GM12878 (cell line): ENCODE measurements at regions of chr11 and their contacts with region 1.

Region 1: GRCh38 chr11:65013692-65014145 is 241 bp upstream of the ARL2 start:
- DNase-seq: peak; percentile 69
- ATAC-seq: peak; percentile 89
- H3K4me3 ChIP-seq: peak overlapping the region; percentile 76
- H3K27ac ChIP-seq: peak overlapping the region; percentile 88
- H3K4me1 ChIP-seq: peaks cover 17% of the 10 kb centered on the region
- H3K27me3 ChIP-seq: no peaks in the 10 kb centered on the region
- CTCF ChIP-seq: peak in 2 of 3 experiments; percentile 51 to 60; a peak in 4 of 6 replicates
- EP300 ChIP-seq: no peak; a peak in 1 of 4 replicates
- POLR2A ChIP-seq: peak; percentile 72
- RAD21 ChIP-seq: peak; percentile 38; the same call in 1 of the 2 replicates

Region 2: DNA sequence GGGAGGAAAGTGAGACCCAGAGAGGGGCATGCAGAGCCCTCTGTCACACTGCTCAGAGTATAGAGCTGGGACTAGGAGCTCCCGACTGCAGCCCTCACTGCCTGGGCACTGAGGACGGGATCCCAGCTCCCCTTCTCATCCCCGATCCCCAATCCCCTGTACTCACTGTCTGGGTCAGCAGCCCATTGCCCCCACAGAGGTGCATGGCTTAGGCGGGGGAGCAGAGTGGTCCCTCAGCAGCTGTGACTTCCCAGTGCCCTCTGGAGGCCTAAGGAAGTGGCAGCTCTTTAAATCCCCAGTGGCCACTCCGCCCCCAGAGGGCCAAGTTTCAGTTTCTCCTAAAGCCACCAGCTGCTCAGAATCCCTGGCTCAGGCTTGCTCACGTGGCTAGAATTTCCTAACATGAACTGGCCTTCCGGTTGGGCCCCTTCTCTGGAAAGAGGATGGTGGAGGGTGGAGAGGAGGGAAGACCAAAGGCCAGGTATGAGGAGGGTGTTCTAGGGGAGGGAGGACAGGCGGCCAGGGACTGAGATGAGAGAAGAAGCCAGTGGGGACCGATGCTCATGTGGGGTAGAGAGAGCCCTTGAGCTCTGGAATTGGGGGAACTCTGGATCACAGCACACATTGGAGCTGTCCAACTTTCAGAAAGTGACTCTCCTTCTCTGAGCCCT is 16.9 kb before region 1 on chr11 and contains the start of gene BATF2:
- CTCF ChIA-PET with region 1: interaction called, 25 read pairs
- POLR2A ChIA-PET with region 1: interaction called, 4 read pairs
- RAD21 ChIA-PET with region 1: interaction called, 9 read pairs
- SMC1A ChIA-PET with region 1: interaction called, 7 read pairs
- in situ Hi-C with region 1: no loop called
- intact Hi-C with region 1: no loop called
- DNase-seq: no peak
- ATAC-seq: peak; percentile 87
- H3K4me3 ChIP-seq: peak within 1 kb of the TSS; percentile 28; the same call in 1 of the 2 replicates
- H3K27ac ChIP-seq: no peak within 1 kb of the TSS
- H3K4me1 ChIP-seq: peaks cover 8% of the 10 kb centered on the region
- H3K27me3 ChIP-seq: no peaks in the 10 kb centered on the region; a peak in 1 of 4 replicates
- CTCF ChIP-seq: peak; percentile 35 to 48 (median 41); a peak in 5 of 6 replicates
- EP300 ChIP-seq: no peak
- POLR2A ChIP-seq: no peak
- RAD21 ChIP-seq: peak; percentile 52
- polyA plus RNA-seq, gene BATF2: 0.18 to 0.24 TPM

Region 3: DNA sequence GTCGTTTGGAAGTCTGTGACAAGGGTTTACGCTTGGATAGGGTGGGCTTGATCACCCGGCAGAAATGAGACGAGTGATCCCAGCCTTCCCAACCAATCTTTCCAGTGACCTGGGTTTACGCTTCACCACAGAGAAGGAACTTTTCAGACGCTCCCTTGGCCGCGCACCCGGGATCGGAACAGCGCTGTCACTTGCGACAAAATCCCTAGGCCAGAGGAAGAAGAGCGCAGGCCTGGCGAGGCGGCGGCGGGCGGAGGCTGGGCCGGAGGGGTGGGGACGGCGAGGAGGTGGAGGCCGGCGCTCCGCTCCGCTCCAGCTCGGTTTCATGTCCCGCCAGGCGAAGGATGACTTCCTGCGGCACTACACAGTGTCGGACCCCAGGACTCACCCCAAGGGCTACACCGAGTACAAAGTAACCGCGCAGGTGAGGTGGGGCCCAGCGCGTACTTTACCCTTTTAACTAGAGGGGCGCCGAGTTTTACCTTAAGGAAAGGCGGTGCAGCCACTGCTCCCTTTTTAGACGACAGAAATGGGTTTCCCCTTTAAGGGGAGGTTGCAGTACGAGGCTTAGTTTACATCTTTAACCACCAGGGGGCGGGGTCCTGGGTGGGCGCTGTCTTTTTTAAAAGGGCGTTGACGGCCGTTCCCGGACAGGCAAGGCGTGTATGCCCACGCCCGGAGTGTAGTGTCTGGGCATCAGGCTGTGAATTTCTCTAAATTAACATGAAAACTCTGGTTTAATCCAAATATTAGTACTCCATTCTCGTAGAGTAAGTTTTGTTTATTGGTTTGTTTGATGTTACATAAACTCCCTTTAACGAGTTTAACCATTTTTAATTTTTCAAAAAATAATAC is 13.7 kb after region 1 on chr11 and contains the start of gene SNX15:
- CTCF ChIA-PET with region 1: interaction called, 39 read pairs
- POLR2A ChIA-PET with region 1: no interaction called
- RAD21 ChIA-PET with region 1: interaction called, 13 read pairs
- SMC1A ChIA-PET with region 1: interaction called, 3 read pairs
- in situ Hi-C with region 1: no loop called
- intact Hi-C with region 1: no loop called
- DNase-seq: peak; percentile 80
- ATAC-seq: peak; percentile 98
- H3K4me3 ChIP-seq: peak within 1 kb of the TSS; percentile 65
- H3K27ac ChIP-seq: peak within 1 kb of the TSS; percentile 74
- H3K4me1 ChIP-seq: peaks cover 8% of the 10 kb centered on the region; the same call in 1 of the 2 replicates
- H3K27me3 ChIP-seq: no peaks in the 10 kb centered on the region
- CTCF ChIP-seq: peak; percentile 29 to 45 (median 37); a peak in 4 of 6 replicates
- EP300 ChIP-seq: no peak
- POLR2A ChIP-seq: peak; percentile 78
- RAD21 ChIP-seq: peak; percentile 28; the same call in 1 of the 2 replicates
- polyA plus RNA-seq, gene SNX15: 2.4 to 3.3 TPM

Region 4: GRCh38 chr11:65083834-65084597 is 70.3 kb after region 1 on chr11 and contains the starts of genes CDCA5 and ZFPL1:
- CTCF ChIA-PET with region 1: interaction called, 9 read pairs
- POLR2A ChIA-PET with region 1: interaction called, 3 read pairs
- RAD21 ChIA-PET with region 1: interaction called, 6 read pairs
- SMC1A ChIA-PET with region 1: interaction called, 3 read pairs
- in situ Hi-C with region 1: no loop called
- intact Hi-C with region 1: loop called (anchors 2 kb)
- DNase-seq: peak; percentile 75
- ATAC-seq: peak; percentile 82
- H3K4me3 ChIP-seq: peak within 1 kb of the TSS; percentile 86
- H3K27ac ChIP-seq: peak within 1 kb of the TSS; percentile 84
- H3K4me1 ChIP-seq: peaks cover 24% of the 10 kb centered on the region
- H3K27me3 ChIP-seq: no peaks in the 10 kb centered on the region
- CTCF ChIP-seq: no peak
- EP300 ChIP-seq: peak in 1 of 2 experiments; percentile 22; a peak in 1 of 4 replicates
- POLR2A ChIP-seq: peak; percentile 97
- RAD21 ChIP-seq: no peak
- polyA plus RNA-seq, gene CDCA5: 21.2 to 34.3 TPM
- polyA plus RNA-seq, gene ZFPL1: 2.2 to 5.6 TPM

Region 5: DNA sequence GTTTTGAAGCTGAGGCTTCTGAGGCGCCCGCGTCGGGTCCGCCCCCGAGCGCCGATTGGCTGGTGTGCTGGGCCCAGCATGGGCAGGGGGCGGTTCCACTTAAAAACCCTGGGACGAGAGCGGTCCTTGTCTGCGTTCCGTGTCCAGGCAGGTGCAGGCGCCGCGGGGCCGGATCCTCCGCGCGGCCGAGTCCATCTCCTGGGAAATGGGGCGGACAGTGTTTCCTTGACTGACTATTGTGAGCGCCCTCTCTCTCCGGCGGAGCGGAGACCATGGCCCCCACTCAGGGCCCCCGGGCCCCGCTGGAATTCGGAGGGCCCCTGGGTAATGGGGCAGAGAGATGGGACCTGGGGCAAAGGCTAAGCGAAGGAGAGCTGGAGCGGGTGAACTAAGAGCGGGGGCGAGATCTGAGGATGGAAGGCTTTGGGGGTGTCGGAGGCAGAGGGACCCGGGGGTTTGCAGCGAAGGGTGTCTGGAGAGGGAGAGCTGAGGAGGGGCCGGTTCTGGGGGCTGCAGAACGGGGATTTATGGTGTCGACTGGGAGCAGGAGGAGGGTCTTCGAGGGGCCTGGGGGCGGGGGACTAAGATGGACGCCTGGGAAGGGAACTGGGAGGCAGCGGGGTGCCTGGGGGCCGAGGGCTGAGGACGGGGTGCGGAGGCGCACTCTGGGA is 98.2 kb after region 1 on chr11 and contains the start of gene TM7SF2:
- CTCF ChIA-PET with region 1: interaction called, 64 read pairs
- POLR2A ChIA-PET with region 1: interaction called, 4 read pairs
- RAD21 ChIA-PET with region 1: interaction called, 14 read pairs
- SMC1A ChIA-PET with region 1: interaction called, 10 read pairs
- in situ Hi-C with region 1: no loop called
- intact Hi-C with region 1: loop called (anchors 1 kb)
- DNase-seq: no peak
- ATAC-seq: peak; percentile 89
- H3K4me3 ChIP-seq: peak within 1 kb of the TSS; percentile 85
- H3K27ac ChIP-seq: peak within 1 kb of the TSS; percentile 14
- H3K4me1 ChIP-seq: peaks cover 24% of the 10 kb centered on the region
- H3K27me3 ChIP-seq: no peaks in the 10 kb centered on the region
- CTCF ChIP-seq: no peak
- EP300 ChIP-seq: no peak
- POLR2A ChIP-seq: peak; percentile 97
- RAD21 ChIP-seq: no peak
- polyA plus RNA-seq, gene TM7SF2: 0.52 to 2.9 TPM

Region 6: DNA sequence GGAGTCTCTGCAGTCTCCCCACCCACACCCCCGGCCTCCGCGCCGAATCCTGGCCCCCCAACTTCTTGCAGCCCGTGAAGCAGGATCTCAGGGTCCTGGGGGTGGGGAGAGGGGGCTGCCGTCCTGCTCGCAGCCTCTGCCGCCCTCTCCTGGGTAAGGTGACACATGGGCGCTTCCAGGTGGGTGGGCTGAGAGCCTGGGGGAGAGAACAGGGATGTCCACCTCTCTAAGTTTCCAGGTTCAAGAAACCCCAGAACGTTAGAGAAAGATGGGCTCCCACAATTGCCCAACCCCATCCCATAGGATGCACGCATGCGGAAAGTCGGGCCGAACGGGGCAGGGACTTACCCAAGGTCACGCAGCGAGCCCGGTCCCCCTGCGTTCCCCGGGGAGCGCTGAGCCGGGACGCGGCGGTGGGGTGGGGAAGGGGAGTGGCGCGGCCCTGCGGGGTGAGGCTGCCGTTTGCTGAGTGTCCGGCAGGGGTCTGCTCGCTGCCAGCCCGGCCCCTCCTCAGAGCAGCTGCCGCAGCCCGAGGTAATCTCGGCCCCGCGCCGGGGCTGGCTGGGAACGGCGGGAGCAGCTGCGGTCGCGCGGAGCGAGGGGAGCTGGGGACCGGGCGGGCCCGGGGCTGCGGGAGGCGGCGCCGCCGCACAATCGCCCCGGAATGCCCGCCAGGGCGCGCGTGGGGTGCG is 167.3 kb after region 1 on chr11:
- CTCF ChIA-PET with region 1: interaction called, 18 read pairs
- POLR2A ChIA-PET with region 1: interaction called, 3 read pairs
- RAD21 ChIA-PET with region 1: interaction called, 5 read pairs
- SMC1A ChIA-PET with region 1: interaction called, 3 read pairs
- in situ Hi-C with region 1: no loop called
- intact Hi-C with region 1: loop called (anchors 5 kb)
- DNase-seq: peak; percentile 19
- ATAC-seq: peak; percentile 88
- H3K4me3 ChIP-seq: peak overlapping the region; percentile 100
- H3K27ac ChIP-seq: peak overlapping the region; percentile 93
- H3K4me1 ChIP-seq: peaks cover 6% of the 10 kb centered on the region; the same call in 1 of the 2 replicates
- H3K27me3 ChIP-seq: no peaks in the 10 kb centered on the region
- CTCF ChIP-seq: peak; percentile 66 to 83 (median 72)
- EP300 ChIP-seq: no peak
- POLR2A ChIP-seq: no peak
- RAD21 ChIP-seq: peak; percentile 87